ENCODE measurements at regions of chr6 and their contacts with region 1.

Region 1: DNA sequence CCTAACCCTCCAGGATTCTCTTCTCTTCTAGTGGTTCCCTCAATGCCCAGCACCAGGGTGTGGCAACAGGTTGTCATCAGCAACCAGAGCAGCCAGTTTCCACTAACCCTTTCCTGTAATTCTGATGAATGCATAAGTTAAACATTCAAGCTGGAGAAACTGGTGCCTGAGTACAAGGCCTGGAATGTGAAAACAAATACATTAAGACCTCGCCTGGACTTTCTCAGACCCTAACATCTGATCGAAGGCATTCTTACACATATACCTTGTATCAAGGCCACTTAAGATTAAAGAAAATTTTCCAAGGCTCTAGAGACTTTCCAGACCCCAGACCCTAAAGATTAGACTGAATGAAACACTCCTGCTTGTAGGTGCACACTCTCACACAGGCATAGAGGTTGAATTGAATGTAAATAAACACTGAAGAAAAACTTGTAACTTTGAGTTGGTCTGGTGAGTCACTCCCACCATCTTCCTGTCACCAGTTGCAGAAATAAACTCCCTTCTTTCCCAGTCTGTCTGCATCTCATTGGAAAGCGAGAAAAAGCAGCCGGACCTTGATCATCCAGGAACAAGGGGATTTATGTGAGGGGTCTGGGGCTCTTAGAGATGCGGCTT is 9.0 kb downstream of the LRP11 start:
- DNase-seq: peak; percentile 70
- H3K4me3 Mint-ChIP-seq: peak overlapping the region; percentile 68
- H3K27ac Mint-ChIP-seq: peak overlapping the region; percentile 91
- H3K4me1 Mint-ChIP-seq: peaks cover 62% of the 10 kb centered on the region
- H3K27me3 Mint-ChIP-seq: no peaks in the 10 kb centered on the region
- CTCF ChIP-seq: no peak

Region 2: DNA sequence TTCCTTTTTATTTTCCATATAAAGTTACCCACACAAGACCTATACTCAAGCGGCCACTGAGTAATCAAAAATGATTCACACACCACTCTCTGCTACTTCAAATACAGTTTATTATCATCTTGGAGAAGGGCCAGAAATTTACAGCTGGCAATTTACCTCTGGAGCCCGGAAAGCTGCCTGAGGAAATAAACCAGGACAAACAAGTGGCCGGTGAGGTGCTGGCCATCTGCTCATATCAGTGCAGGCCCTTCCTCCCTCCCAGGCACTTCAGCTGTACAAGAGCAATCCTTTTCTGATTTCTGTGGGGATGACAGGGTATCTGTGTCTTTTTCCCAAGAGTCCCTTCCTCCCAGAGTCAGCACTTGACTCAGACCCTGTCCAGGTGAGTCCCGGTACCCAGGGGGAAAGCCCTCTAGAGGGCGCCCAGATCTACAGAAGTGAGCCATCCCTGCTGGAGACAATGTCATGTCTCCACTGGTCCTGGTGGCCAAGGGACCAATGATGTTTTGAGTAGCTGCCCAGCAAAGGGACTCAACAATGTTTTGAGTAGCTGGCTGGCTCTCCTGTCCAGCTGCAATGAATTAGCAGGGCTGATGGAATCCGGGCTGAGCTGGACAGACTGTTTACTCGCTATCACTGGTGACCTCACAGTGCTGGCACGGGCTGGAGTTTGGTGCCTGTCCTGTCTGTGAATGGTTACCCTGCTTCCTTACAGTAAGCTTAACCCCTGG is 14.6 kb before region 1 on chr6:
- CTCF ChIA-PET with region 1: interaction called, 7 read pairs
- intact Hi-C with region 1: loop called (anchors 2 kb)
- DNase-seq: peak; percentile 79
- H3K4me3 Mint-ChIP-seq: no peak overlapping the region
- H3K27ac Mint-ChIP-seq: no peak overlapping the region
- H3K4me1 Mint-ChIP-seq: peaks cover 41% of the 10 kb centered on the region
- H3K27me3 Mint-ChIP-seq: no peaks in the 10 kb centered on the region
- CTCF ChIP-seq: peak; percentile 26

Region 3: DNA sequence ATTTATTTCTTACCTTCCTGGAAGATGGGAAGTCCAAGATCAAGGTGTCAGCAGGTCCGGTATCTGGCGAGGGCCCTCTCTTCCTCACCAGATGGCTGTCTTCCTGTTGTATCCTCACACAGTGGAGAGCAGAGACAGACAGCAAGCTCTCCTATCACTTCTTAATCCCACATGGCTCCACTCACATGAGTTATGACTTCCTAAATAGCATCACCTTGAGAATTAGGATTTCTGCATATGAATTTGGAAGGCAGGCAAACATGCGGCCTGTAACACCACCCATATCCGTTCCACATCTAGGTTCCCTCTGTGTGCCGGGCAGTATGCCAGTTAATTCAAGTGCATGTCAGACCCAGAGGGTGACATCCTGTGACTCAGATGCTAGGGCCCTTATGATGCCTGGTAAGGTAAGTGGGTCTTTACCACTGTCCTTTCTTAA is 40.7 kb after region 1 on chr6:
- CTCF ChIA-PET with region 1: no interaction called
- intact Hi-C with region 1: loop called (anchors 5 kb)
- DNase-seq: peak; percentile 52
- H3K4me3 Mint-ChIP-seq: no peak overlapping the region
- H3K27ac Mint-ChIP-seq: no peak overlapping the region
- H3K4me1 Mint-ChIP-seq: peaks cover 54% of the 10 kb centered on the region
- H3K27me3 Mint-ChIP-seq: peaks cover 8% of the 10 kb centered on the region
- CTCF ChIP-seq: no peak

Region 4: GRCh38 chr6:150865406-150866146 is 1010.4 kb after region 1 on chr6 and contains the start of gene MTHFD1L:
- CTCF ChIA-PET with region 1: no interaction called
- intact Hi-C with region 1: no loop called
- DNase-seq: peak; percentile 85
- H3K4me3 Mint-ChIP-seq: peak within 1 kb of the TSS; percentile 74
- H3K27ac Mint-ChIP-seq: no peak within 1 kb of the TSS
- H3K4me1 Mint-ChIP-seq: peaks cover 9% of the 10 kb centered on the region
- H3K27me3 Mint-ChIP-seq: no peaks in the 10 kb centered on the region
- CTCF ChIP-seq: peak; percentile 44
- total RNA-seq, gene MTHFD1L: 37.2 and 47.8 TPM in 2 replicates